ENCODE measurements at regions of chr15 and their contacts with region 1.

Region 1: GRCh38 chr15:42955518-42955917 is 34.9 kb upstream of the TTBK2 start:
- DNase-seq: peak; percentile 95
- H3K4me3 ChIP-seq: no peak overlapping the region
- H3K27ac ChIP-seq: peak overlapping the region; percentile 71
- H3K4me1 ChIP-seq: peaks cover 19% of the 10 kb centered on the region
- H3K27me3 ChIP-seq: no peaks in the 10 kb centered on the region
- CTCF ChIP-seq: no peak

Region 2: GRCh38 chr15:42528970-42529369 is 426.5 kb before region 1 on chr15:
- CTCF ChIA-PET with region 1: no interaction called
- dilution Hi-C with region 1: no loop called
- in situ Hi-C with region 1: no loop called
- intact Hi-C with region 1: no loop called
- DNase-seq: no peak
- H3K4me3 ChIP-seq: no peak overlapping the region
- H3K27ac ChIP-seq: no peak overlapping the region
- H3K4me1 ChIP-seq: no peaks in the 10 kb centered on the region
- H3K27me3 ChIP-seq: no peaks in the 10 kb centered on the region
- CTCF ChIP-seq: no peak

Region 3: DNA sequence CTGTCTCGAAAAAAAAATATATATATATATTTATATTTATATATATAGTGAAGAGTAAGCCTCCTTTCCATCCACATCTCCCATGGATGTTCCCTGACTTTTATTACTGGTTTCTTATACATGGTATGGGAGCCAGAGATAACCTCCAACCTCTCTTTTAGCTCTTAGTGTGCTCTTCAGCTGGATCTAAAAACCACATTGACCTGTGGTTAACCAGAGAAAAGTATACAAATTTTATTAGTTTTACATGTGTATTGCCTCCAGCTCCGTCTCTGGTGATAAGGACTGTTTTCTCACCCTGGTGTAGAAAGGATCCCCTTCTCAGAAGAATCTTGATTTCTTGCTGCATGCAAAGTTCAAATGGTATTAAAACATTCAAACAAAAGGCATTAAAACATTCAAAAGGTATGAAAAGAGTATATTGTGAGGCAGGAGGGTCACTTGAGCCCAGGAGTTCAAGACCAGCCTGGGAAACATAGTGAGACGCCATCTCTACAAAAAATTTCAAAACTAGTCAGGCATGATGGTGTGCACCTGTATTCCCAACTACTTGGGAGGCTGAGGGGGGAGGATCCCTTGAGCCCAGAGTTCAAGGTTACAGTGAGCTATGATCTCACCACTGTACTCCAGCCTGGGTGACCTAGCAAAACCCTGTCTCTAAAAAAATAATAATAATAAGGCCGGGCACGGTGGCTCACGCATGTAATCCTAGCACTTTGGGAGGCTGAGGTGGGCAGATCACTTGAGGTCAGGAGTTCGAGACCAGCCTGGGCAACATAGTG is 21.4 kb before region 1 on chr15:
- CTCF ChIA-PET with region 1: no interaction called
- dilution Hi-C with region 1: no loop called
- in situ Hi-C with region 1: no loop called
- intact Hi-C with region 1: loop called (anchors 2 kb)
- DNase-seq: peak; percentile 20
- H3K4me3 ChIP-seq: no peak overlapping the region
- H3K27ac ChIP-seq: no peak overlapping the region
- H3K4me1 ChIP-seq: peaks cover 10% of the 10 kb centered on the region
- H3K27me3 ChIP-seq: no peaks in the 10 kb centered on the region
- CTCF ChIP-seq: no peak